ENCODE measurements at regions of chr12 and their contacts with region 1.

Region 1: DNA sequence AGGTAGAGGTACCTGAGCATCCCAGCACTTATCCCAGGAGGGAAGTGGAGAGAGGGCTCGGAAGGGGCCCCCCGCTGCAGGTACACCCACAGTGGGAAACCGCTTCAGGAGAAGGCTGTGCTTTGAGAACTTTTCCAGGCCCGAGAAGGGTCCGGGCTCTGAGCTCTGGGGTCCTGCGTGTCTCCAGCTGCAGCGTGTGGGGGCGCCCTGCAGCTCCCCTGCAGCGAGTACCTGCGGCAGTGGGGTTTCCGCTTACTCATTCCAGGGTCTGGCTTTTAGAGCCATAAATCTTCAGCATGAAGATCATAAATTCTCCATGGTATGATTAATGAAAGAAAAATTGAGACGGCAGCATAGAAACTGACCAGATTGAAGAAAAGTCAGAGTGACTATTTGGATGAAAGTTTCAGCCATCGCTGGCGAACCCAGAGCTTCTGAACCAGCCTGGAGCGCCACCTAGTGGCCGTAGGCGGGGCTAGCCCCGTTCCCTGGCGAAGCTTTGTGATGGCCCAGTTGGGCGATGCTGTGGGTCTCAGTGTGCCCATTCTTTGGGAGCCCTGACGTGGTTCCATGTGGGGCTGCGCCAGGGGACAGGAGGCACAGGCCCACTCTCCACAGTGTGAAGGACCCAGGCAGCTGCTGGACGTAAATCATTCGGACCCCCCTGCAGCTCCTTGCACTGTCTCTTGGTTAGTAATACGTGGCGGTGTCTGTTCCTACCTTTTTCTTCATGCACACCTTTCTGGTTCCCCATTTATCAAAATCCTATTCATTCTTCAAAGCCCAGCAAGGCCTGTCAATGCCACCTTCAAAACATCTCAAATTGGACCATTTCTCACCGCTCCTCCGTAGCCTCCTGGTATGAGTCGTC is 198.2 kb downstream of the TSPAN9 start:
- DNase-seq: peak; percentile 71 to 88 (median 86)
- H3K4me3 ChIP-seq: no peak overlapping the region
- H3K27ac ChIP-seq: no peak overlapping the region
- H3K4me1 ChIP-seq: peaks cover 6% of the 10 kb centered on the region
- H3K27me3 ChIP-seq: no peaks in the 10 kb centered on the region
- CTCF ChIP-seq: peak; percentile 87 to 96 (median 89)
- EP300 ChIP-seq: no peak
- POLR2A ChIP-seq: no peak

Region 2: GRCh38 chr12:3135522-3136461 is 139.6 kb before region 1 on chr12:
- intact Hi-C with region 1: loop called (anchors 2 to 5 kb)
- DNase-seq: peak in 3 of 5 donors; percentile 44 to 59 (median 57)
- H3K4me3 ChIP-seq: no peak overlapping the region
- H3K27ac ChIP-seq: no peak overlapping the region
- H3K4me1 ChIP-seq: peaks cover 29% of the 10 kb centered on the region
- H3K27me3 ChIP-seq: no peaks in the 10 kb centered on the region
- CTCF ChIP-seq: peak; percentile 63 to 82 (median 78)
- EP300 ChIP-seq: no peak
- POLR2A ChIP-seq: no peak

Region 3: DNA sequence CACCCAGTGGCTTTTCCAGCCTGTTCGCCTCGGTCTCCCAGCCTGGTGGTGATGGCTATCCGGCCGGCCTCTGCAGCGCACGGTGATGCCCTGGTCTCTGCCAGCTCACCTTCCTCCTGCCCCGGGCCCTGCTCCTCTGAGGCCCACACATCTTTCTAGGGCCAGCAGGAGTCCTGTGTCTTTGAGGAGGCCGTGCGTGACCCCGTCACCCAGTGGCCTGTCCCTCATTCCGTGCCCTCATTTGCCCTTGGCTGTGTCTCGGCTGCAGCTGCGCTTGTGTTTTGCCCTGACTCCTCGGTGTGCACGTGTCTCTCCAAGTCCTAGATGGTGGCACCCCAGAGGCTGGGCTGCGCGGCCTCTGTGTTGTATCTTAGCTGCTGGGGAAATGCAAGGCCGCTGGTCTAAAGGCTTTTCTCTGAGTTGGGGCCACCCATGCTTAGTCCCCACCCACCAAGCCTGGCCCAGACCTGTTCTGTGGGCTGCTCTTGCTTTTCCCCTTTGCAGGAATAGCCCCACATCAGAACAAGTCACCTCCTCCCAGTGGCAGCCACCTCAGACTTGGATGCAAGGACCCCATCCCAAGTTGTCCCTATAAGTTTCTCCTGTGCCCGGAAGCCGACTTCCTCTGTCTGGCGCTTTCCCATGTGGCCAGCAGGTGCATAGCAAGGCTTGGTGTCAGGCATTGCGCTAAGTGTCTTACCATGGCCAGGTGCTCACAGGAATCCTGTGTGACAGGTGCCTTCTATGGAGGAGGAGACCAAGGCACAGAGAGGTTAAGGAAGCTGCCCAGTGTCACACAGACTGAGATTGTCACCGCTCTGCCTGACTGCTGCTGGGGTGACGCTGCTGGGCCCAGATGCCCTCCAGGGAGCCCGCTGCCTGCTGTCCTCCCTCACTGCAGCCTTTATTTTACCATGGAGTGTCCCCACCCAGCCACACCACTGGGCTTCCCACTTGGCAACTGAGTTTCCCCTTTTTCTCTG is 133.8 kb before region 1 on chr12:
- intact Hi-C with region 1: loop called in 3 of 4 experiments (anchors 2 to 5 kb)
- DNase-seq: no peak
- H3K4me3 ChIP-seq: no peak overlapping the region
- H3K27ac ChIP-seq: no peak overlapping the region
- H3K4me1 ChIP-seq: peaks cover 30% of the 10 kb centered on the region
- H3K27me3 ChIP-seq: no peaks in the 10 kb centered on the region
- CTCF ChIP-seq: no peak
- EP300 ChIP-seq: no peak
- POLR2A ChIP-seq: no peak

Region 4: DNA sequence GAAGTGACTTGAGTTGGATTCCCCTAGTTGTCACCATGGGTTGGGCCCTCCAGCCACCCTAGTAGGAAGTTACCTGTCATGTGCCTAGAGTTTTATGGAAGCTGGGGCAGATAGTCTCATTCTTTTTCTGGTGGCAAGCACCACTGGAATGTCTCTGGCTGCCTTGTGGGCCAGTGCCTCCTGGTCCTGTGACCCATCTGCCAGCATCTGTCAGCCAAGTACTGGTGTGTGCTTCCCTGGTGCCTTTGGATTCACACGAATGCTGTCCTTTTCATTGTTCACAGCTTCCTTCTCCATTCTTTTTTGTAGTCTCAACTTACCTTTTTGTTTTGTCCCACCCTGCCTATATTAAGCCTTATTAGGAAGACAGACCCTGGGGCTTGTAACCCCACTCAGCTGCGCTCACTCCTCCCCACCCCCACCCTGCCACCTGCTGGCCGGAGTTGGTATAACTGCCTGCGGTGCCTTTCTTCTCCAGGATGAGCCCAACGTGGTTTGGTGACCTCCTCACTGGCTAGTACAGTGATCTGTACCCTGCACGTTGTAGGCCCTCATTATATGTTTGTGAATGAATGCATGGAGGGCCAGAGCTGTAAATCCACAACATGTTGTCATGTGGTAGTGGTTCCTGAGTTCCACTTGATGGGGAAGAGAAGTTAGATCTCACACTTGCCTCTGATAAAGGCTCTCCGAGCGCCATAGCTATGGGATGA is 72.5 kb before region 1 on chr12:
- intact Hi-C with region 1: loop called in 3 of 4 experiments (anchors 5 to 10 kb)
- DNase-seq: peak; percentile 53 to 83 (median 74)
- H3K4me3 ChIP-seq: no peak overlapping the region
- H3K27ac ChIP-seq: no peak overlapping the region
- H3K4me1 ChIP-seq: peaks cover 6% of the 10 kb centered on the region
- H3K27me3 ChIP-seq: no peaks in the 10 kb centered on the region
- CTCF ChIP-seq: peak; percentile 79 to 84 (median 82)
- EP300 ChIP-seq: no peak
- POLR2A ChIP-seq: no peak

Measured in ovary (tissue), 10 donors.